GM18951 (cell line): ENCODE measurements at regions of chr12 and their contacts with region 1.

Region 1: DNA sequence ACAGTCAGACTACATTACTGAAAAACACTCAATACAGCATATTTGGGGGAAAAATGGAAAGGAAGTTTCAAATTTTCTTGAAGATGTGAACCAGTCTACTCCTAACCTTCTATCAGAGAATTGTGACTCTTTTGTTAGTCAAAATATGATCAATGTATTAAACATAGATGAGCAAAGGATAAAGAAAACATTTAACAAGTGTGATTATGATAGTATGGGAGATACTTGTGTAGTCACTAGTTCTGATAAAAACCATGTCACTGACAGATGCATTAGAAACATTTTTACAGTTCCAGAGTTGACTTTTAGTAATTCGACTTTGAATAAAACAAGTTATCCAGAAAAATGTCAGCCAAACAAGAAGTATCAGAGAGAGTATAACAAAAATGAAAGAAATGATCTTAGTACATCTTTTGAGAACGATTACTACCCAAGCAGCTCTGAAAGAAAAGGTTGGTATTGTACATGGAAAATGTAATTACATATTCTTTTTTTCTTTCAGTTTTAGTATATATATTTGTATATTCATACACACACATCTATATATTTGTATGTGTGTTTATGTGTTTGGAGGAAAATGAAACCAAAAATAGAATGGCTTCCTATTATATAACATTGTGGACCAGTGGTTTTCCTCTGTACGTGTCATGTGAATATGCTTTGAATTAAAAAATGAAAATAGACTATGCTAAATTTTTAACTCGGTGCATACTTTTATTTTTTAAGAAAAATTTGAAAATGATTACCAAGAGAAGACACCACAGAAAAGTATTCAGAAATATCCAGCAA is 63.3 kb upstream of the ABCD2 start:
- POLR2A ChIP-seq: no peak

Region 2: GRCh38 chr12:39116867-39117266 is 566.0 kb before region 1 on chr12:
- in situ Hi-C with region 1: no loop called
- POLR2A ChIP-seq: no peak

Region 3: DNA sequence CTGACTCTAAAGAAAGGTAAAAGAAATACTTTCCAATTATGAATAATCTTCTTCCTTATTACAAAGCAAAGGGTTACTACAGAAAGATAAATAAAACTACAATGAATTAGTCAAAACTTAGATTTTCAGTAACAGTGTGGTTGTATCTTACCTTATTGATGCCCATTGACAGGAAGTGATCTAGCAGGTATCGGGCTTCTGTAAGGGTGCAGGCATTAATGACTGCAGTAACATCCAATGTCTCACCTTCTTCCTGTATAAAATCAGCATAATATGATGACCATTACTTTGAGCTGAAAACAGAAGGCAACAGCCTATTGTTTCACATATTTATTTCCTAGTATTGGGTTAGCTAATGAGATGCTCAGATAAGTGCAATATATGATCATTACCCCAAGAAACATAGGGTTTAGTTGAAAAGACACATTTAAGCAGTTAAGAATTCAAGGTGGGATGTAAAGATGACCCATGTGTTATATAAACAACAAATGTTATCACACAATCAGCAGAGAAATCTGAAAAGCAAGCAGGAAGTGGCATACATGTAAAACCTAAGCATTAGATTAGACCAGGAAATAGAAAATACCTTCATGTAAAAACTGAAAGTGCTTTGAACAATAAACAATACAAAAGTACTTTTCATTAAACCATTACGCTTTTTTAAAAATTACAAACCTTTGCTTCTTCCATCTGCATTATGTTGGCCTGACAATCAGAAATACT is 351.2 kb before region 1 on chr12:
- in situ Hi-C with region 1: loop called (anchors 10 kb)
- POLR2A ChIP-seq: no peak

Region 4: GRCh38 chr12:39389399-39390150 is 293.3 kb before region 1 on chr12:
- in situ Hi-C with region 1: no loop called
- POLR2A ChIP-seq: no peak

Region 5: DNA sequence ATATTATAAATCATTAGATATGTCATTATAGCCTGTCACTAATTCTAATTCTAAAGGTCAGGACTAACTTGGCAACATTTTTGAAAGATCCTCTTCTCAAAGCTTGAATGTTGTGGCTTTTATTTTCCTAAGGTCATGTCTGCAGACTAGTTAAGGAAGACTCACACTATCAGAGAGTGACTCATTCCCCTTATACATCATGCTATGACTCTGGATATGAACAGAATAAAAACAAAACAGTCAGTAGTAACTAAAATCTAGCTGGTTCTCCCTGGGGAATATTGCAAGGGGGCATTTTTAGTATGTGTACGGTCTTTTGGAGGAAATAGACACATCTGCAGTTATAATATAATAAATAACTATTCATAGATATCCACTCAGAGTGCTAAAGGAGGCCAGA is 252.4 kb after region 1 on chr12:
- in situ Hi-C with region 1: no loop called
- POLR2A ChIP-seq: no peak

Region 6: DNA sequence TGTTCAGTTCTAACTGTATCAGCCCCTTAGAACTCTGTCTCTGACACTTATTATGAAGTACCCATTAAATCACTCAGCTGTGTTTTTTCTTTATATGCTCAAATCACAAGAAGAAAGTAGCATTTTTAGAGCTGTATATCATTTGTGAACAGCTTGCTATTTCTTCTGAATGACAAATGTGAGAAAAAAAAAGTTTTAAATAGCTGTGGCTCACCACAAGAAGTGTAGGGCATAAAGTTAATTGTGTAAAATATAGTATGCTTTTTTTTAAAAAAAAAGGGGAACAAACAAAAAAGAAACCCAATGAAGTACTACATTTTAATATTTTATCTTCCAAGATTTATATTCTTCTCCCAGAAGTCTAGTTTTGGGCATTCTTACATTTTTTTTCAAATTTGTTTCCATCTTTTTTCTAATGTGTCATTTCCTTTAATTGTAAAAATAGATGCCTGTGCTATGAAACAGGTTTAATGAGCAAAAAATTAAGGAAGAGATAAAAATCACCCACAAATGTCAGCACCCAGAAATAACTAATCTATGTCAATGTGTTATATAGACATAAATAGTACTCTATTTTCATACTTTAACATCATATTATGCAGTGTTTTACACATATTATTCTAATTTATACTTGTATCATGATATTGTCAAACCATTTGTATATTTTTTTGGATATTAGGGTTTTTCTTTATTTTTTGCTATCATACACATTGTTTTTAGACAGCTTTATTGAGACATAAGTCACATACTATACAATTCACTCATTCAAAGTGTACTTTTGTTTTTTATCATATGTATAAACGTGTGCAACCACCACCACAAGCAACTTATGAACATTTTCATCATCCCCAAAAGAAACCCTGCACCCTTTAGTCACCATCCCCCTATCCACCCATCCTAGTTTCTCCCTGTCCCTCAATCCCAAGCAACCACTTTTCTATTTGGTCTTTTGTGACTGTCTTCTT is 519.5 kb after region 1 on chr12:
- in situ Hi-C with region 1: no loop called
- POLR2A ChIP-seq: no peak